Right ventricle myocardium inferior (tissue), 1 donor: ENCODE measurements at regions of chr9 and their contacts with region 1.

Region 1: GRCh38 chr9:35079426-35080341 is at the start of gene FANCG:
- DNase-seq: peak; percentile 97
- ATAC-seq: peak; percentile 99
- total RNA-seq, gene FANCG: 4.2 TPM

Region 2: GRCh38 chr9:35096035-35096849 is 16.6 kb after region 1 on chr9 and contains the start of gene PIGO:
- intact Hi-C with region 1: loop called (anchors 1 kb)
- DNase-seq: peak; percentile 96
- ATAC-seq: peak; percentile 93
- total RNA-seq, gene PIGO: 8.5 TPM